ENCODE measurements at regions of chr4 and their contacts with region 1.

Region 1: GRCh38 chr4:77240469-77241066 is 83.6 kb downstream of the CCNG2 start:
- DNase-seq: peak; percentile 69 to 84
- ATAC-seq: no peak
- H3K4me3 ChIP-seq: no peak overlapping the region
- H3K27ac ChIP-seq: no peak overlapping the region
- H3K4me1 ChIP-seq: no peaks in the 10 kb centered on the region
- H3K27me3 ChIP-seq: peaks cover 0 to 1% of the 10 kb centered on the region in 2 donors

Region 2: GRCh38 chr4:77358315-77358928 is 117.9 kb after region 1 on chr4:
- intact Hi-C with region 1: loop called (anchors 2 to 5 kb)
- DNase-seq: no peak
- ATAC-seq: no peak
- H3K4me3 ChIP-seq: no peak overlapping the region
- H3K27ac ChIP-seq: no peak overlapping the region
- H3K4me1 ChIP-seq: no peaks in the 10 kb centered on the region
- H3K27me3 ChIP-seq: peaks cover 0 to 2% of the 10 kb centered on the region in 2 donors

Region 3: DNA sequence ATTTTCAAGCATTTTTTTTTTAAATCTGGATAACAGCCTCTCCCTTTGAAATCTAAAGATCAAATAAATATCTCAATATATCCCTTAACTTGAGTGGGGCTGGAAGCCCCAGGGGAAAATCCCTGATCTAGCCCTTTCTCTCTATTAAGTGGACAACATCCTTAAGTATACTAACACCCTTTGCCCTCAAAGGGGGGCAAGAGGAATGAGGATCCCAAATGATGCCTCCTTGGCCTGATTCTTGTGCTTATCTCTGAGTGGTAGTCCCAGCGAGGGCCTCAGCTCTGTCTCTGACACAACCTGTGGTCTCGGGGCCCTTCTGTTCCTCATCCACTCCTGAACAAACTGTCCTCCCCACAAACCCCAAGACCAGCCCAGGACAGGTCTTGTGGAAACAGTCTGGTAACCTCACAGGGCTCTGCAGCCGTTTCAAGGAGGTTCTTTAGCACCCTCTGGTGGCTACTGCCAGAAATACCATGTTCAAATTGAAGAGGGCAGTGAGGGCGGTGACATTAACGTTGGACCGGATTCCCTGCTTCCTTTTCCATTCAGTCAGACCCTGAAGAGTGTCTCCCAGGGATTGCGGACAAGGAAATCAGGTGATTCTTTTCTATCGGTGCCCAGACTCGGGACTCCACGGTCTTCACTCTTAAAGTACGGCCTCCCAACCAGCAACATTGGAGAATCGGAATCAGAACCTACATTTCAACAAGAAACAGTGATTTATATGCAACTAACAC is 378.0 kb after region 1 on chr4:
- intact Hi-C with region 1: loop called (anchors 5 to 10 kb)
- DNase-seq: peak in 1 of 2 donors; percentile 55
- ATAC-seq: peak; percentile 86
- H3K4me3 ChIP-seq: no peak overlapping the region
- H3K27ac ChIP-seq: no peak overlapping the region
- H3K4me1 ChIP-seq: no peaks in the 10 kb centered on the region
- H3K27me3 ChIP-seq: no peaks in the 10 kb centered on the region